OCI-LY7 (cell line): ENCODE measurements at regions of chr9 and their contacts with region 1.

Region 1: GRCh38 chr9:6412487-6413364 is at the start of gene UHRF2:
- DNase-seq: peak; percentile 99
- H3K4me3 ChIP-seq: peak within 1 kb of the TSS; percentile 83
- H3K27ac ChIP-seq: peak within 1 kb of the TSS; percentile 94
- H3K4me1 ChIP-seq: peaks cover 49% of the 10 kb centered on the region
- CTCF ChIP-seq: no peak
- total RNA-seq, gene UHRF2: 76.1 and 76.6 TPM in 2 replicates

Region 2: GRCh38 chr9:6399071-6399470 is 13.7 kb before region 1 on chr9:
- CTCF ChIA-PET with region 1: no interaction called
- POLR2A ChIA-PET with region 1: interaction called, 12 read pairs
- intact Hi-C with region 1: no loop called
- DNase-seq: no peak
- H3K4me3 ChIP-seq: no peak overlapping the region
- H3K27ac ChIP-seq: no peak overlapping the region
- H3K4me1 ChIP-seq: peaks cover 14% of the 10 kb centered on the region
- CTCF ChIP-seq: no peak

Region 3: DNA sequence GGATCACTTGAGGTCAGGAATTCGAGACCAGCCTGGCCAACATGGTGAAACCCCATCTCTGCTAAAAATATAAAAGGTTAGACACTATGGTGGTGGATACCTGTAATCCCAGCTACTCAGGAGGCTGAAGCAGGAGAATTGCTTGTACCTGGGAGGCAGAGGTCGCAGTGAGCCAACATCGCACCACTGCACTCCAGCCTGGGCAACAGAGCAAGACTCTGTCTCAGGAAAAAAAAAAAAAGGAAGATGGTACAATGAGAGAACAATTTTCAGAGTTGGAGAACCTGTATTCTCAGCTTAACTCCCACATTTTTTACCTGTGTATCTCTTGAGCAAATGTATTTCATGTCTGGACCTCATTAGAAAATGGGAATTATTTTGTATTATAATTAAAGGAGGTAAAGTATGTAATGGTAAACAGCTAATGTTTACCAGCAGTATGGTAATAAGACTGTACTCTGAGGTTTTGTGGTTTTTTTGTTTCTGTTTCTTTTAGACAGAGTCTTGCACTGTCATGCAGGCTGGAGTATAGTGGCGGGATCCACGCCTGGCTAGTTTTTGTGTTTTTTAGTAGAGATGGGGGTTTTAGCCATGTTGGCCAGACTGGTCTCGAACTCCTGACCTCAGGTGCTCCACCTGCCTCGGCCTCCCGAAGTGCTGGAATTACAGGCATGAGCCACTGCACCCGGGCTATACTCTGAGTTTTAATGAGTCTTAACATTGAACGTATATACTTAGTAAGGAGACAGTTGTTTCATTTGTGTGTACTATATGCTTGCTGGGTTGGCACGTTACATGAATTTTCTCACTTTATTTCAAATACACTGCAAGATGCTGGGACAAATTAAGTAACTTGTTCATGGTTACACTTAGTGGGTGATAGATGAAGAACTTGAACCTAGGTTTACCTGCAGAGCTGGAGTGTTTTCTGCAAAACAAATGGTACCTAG is 16.5 kb after region 1 on chr9:
- CTCF ChIA-PET with region 1: interaction called, 3 read pairs
- POLR2A ChIA-PET with region 1: interaction called, 34 read pairs
- intact Hi-C with region 1: no loop called
- DNase-seq: peak; percentile 63
- H3K4me3 ChIP-seq: no peak overlapping the region
- H3K27ac ChIP-seq: peak overlapping the region; percentile 47
- H3K4me1 ChIP-seq: peaks cover 74% of the 10 kb centered on the region
- CTCF ChIP-seq: no peak

Region 4: DNA sequence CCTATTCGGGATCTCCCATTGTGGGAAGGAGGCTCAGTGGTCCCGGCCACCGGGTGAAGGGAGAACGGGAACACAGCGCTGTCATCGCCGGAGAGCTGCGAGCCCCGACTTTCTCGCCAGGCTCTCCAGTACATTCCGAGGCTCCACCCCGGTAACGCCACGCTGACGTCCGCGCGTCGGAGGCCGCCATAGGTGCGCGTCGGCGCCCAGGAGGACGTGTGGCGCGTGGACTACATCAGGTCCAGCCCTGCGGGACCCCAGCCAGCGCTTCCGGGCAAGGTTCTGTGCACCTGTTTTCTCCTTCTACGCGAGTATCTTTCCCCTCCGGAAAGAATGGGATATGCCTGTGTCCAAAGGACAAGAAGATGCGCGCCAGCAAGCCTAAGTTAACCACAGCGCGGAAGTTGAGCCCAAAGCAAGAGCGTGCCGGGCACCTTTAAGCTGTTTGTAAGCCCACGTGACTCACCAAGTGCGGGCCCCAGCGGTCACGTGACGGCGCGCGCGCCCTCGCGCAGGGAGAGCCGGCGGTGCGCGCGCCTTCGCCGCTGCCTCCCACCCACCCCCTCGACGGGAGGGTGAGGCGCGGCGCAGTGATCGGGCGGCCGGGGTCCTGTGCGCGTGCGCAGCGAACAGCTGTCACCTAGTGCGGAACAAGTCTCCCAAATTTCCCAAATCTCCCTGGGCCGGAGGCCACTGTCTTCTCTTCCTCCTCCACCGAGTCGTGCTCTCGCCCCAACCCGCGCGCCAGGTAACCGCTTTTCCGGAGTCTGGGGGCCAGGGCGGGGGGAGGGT is 344.9 kb after region 1 on chr9 and contains the start of gene KDM4C:
- CTCF ChIA-PET with region 1: no interaction called
- POLR2A ChIA-PET with region 1: no interaction called
- intact Hi-C with region 1: loop called (anchors 5 kb)
- DNase-seq: peak; percentile 97
- H3K4me3 ChIP-seq: peak within 1 kb of the TSS; percentile 94
- H3K27ac ChIP-seq: peak within 1 kb of the TSS; percentile 80
- H3K4me1 ChIP-seq: peaks cover 22% of the 10 kb centered on the region
- CTCF ChIP-seq: no peak
- total RNA-seq, gene KDM4C: 51.5 and 57.9 TPM in 2 replicates